ENCODE measurements at regions of chr19 and their contacts with region 1.

Region 1: DNA sequence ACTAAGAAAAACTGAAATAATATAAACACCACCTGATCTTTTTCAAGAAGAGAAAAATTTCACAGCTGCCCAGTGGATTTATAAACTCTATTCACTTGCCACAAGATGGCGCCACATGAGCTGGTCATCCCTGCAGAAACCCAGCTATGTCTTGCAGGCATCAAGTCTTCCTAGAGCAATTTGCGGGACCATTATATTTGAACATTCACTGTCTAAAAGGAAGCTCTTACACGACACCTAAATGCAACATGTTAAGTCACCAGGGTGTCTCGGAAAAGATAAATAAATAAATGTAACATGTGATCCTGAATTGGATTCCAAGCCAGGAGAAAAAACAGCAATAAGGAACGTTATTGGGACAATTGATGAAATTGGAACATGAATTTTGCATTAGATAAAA is 20.3 kb upstream of the AKT2 start:
- DNase-seq: peak; percentile 81
- ATAC-seq: peak; percentile 65
- H3K4me3 Mint-ChIP-seq: no peak overlapping the region
- H3K27ac Mint-ChIP-seq: peak overlapping the region; percentile 3; the same call in 1 of the 2 replicates
- H3K4me1 Mint-ChIP-seq: peaks cover 12% of the 10 kb centered on the region
- H3K27me3 Mint-ChIP-seq: no peaks in the 10 kb centered on the region
- CTCF ChIP-seq: peak; percentile 46; the same call in 1 of the 2 replicates

Region 2: GRCh38 chr19:40267601-40267997 is 37.8 kb before region 1 on chr19:
- CTCF ChIA-PET with region 1: no interaction called
- POLR2A ChIA-PET with region 1: no interaction called
- DNase-seq: no peak
- ATAC-seq: no peak
- H3K4me3 Mint-ChIP-seq: no peak overlapping the region
- H3K27ac Mint-ChIP-seq: peak overlapping the region; percentile 94
- H3K4me1 Mint-ChIP-seq: peaks cover 22% of the 10 kb centered on the region
- H3K27me3 Mint-ChIP-seq: no peaks in the 10 kb centered on the region
- CTCF ChIP-seq: no peak

Region 3: DNA sequence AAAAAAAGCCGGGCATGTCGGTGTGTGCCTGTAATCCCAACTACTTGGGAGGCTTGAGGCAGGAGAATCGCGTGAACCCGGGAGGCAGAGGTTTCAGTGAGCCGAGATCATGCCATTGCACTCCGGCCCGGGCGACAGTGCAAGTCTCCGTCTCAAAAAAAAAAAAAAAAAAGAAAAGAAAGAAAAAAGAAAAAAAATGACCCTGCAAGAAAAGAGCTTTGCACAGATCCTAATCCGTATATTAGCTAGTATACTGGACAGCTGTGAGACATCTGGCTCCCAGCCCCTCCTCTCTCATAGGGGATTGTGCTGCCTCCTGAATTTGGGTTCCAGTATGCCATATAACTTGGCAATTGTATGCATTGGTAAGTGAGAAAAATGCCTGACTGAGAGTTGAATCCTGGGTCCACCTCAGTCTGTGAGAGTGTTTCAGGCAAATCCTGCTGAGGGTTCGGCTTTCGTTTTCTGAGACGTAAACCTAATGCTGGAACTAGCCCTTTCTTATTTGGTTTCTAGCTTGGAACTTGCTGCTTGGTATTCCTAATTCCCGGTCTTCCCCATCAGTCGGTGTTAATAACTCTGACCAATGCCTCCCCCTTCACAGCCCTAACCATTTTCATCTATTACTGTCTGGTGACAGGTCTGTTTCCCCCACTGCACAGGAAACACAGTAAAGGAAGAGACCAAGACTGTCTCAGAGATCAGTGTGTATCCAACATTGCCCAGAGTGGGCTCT is 19.0 kb before region 1 on chr19:
- CTCF ChIA-PET with region 1: interaction called, 15 read pairs
- POLR2A ChIA-PET with region 1: no interaction called
- DNase-seq: no peak
- ATAC-seq: no peak
- H3K4me3 Mint-ChIP-seq: peak overlapping the region; percentile 80
- H3K27ac Mint-ChIP-seq: peak overlapping the region; percentile 99
- H3K4me1 Mint-ChIP-seq: peaks cover 21% of the 10 kb centered on the region
- H3K27me3 Mint-ChIP-seq: no peaks in the 10 kb centered on the region
- CTCF ChIP-seq: no peak

Region 4: DNA sequence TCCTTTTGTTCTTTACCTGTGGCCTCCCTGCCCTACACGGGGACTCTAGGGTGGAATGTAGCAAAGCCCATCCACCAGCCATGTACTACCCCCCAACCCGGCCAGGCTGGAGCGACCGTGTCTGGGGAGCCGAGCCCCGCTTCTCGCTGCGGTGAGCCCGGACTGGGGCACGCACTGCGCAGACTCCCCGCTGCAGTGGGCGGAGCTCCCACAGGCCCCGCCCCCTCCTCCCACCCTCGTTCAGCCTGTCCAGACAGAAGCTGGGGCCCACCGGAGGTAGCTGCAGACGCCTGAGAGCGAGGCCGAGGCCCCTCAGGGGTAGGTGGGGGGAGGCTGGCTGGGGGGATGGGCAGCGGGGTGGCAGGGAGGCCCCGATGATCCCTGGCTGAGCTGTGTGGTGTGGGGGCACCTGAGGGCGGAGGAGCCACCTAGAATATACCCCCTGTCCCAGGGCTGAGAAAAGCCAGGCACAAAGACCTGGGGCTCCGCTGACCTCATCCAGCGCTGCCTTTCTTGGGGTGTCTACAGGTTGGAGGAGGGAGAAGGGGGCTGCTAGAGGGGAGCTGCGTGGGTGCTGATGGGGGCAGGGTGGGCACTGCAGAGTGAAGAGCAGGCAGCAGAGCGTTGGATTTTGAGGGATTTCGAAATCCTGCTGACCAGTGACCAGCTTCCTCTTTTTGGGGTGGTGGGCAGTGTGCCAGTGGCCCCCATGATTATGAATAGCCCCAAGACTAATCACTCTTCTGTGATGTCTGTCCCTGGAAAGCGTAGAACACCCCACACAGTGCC is 60.4 kb after region 1 on chr19:
- CTCF ChIA-PET with region 1: interaction called, 18 read pairs
- POLR2A ChIA-PET with region 1: interaction called, 3 read pairs
- DNase-seq: peak; percentile 89
- ATAC-seq: peak; percentile 82
- H3K4me3 Mint-ChIP-seq: peak overlapping the region; percentile 65
- H3K27ac Mint-ChIP-seq: no peak overlapping the region
- H3K4me1 Mint-ChIP-seq: peaks cover 12% of the 10 kb centered on the region
- H3K27me3 Mint-ChIP-seq: peaks cover 5% of the 10 kb centered on the region; the same call in 1 of the 2 replicates
- CTCF ChIP-seq: no peak

Region 5: DNA sequence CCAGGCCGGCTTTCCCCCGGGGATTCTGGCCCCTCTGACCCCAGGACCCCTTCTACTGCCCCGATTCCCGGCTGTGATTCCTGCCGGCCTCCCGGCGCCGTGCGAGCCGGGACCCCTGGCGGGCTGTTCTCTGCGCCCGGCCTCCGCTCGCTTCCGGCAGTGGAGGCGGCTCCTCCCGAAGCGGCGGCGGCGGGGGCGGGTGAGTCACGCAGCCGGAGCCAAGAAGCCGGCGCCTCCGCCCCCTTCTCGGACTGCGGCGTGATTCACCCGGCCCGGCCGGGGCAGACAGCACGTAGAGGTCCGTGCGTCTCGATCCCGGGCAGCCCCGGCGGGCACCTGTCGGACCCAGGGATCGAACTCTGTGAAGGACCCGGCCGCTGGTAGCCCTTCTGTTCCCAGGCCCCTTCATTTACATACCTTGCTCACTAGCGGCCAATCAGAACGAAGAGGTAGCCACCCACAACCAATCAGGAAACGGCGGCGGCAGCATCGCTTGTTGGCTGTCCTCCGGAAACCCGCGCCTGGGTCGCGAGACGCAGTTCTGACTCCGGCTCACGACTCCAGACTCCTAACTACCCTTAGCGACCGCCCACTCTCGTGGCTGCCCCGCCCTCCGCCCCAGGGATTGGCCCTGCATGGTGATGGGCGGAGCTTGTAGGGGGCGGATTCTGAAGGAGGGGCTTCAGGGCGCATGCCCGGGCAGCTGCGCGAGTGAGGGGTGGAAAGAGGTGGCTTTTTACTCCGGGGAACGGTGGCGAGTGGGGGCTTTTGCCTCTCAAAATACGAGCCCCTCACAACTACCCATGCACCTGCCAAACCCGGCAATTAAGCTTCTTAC is 120.3 kb after region 1 on chr19 and contains the start of gene SERTAD1:
- CTCF ChIA-PET with region 1: interaction called, 25 read pairs
- POLR2A ChIA-PET with region 1: interaction called, 3 read pairs
- DNase-seq: peak; percentile 100
- ATAC-seq: peak; percentile 89
- H3K4me3 Mint-ChIP-seq: peak within 1 kb of the TSS; percentile 91
- H3K27ac Mint-ChIP-seq: peak within 1 kb of the TSS; percentile 97
- H3K4me1 Mint-ChIP-seq: peaks cover 16% of the 10 kb centered on the region
- H3K27me3 Mint-ChIP-seq: peaks cover 3% of the 10 kb centered on the region; the same call in 1 of the 2 replicates
- CTCF ChIP-seq: peak; percentile 80
- total RNA-seq, gene SERTAD1: 6.8 to 8.6 TPM (median 7.4 TPM) in 3 replicates

Region 6: DNA sequence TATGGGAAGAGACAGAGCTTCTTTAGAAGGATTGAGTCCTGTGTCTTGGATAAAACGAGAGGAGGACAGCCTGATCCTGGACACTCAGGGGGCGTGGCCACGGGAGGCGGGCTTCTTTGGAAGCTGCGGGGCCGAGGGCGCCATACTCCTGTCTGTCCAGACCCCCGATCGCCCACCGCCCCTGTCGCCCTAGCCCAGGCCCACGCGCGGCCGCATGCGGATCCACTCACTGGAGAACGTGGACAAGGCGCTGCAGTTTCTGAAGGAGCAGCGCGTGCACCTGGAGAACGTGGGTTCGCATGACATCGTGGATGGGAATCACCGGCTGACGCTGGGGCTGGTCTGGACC is 184.5 kb after region 1 on chr19:
- CTCF ChIA-PET with region 1: interaction called, 11 read pairs
- POLR2A ChIA-PET with region 1: no interaction called
- DNase-seq: no peak
- ATAC-seq: no peak
- H3K4me3 Mint-ChIP-seq: no peak overlapping the region
- H3K27ac Mint-ChIP-seq: no peak overlapping the region
- H3K4me1 Mint-ChIP-seq: peaks cover 5% of the 10 kb centered on the region
- H3K27me3 Mint-ChIP-seq: peaks cover 67% of the 10 kb centered on the region
- CTCF ChIP-seq: no peak